ENCODE measurements at regions of chr14 and their contacts with region 1.

Region 1: GRCh38 chr14:23555882-23556699 is at the start of gene THTPA:
- DNase-seq: peak; percentile 71 to 96
- H3K4me3 ChIP-seq: peak within 1 kb of the TSS; percentile 85 to 89
- H3K27ac ChIP-seq: peak within 1 kb of the TSS; percentile 92 to 97
- H3K4me1 ChIP-seq: peaks cover 5 to 25% of the 10 kb centered on the region in 2 donors
- H3K27me3 ChIP-seq: no peaks in the 10 kb centered on the region
- CTCF ChIP-seq: no peak
- total RNA-seq, gene THTPA: 115 TPM

Region 2: GRCh38 chr14:22918804-22919600 is 637.1 kb before region 1 on chr14 and contains the start of gene RBM23:
- intact Hi-C with region 1: no loop called
- DNase-seq: peak; percentile 99 to 100
- H3K4me3 ChIP-seq: peak within 1 kb of the TSS; percentile 57 to 65
- H3K27ac ChIP-seq: peak within 1 kb of the TSS; percentile 86 to 93
- H3K4me1 ChIP-seq: peaks cover 6 to 18% of the 10 kb centered on the region in 2 donors
- H3K27me3 ChIP-seq: no peaks in the 10 kb centered on the region
- CTCF ChIP-seq: no peak
- total RNA-seq, gene RBM23: 113 TPM

Region 3: GRCh38 chr14:23469127-23469905 is 86.8 kb before region 1 on chr14 and contains the start of gene NGDN:
- intact Hi-C with region 1: loop called (anchors 2 kb)
- DNase-seq: peak; percentile 89 to 99
- H3K4me3 ChIP-seq: peak within 1 kb of the TSS; percentile 87 to 94
- H3K27ac ChIP-seq: peak within 1 kb of the TSS; percentile 83 to 85
- H3K4me1 ChIP-seq: peaks cover 0 to 7% of the 10 kb centered on the region in 2 donors
- H3K27me3 ChIP-seq: no peaks in the 10 kb centered on the region
- CTCF ChIP-seq: peak; percentile 79 to 85 (median 82)
- total RNA-seq, gene NGDN: 7.8 TPM